A673 (cell line): ENCODE measurements at regions of chr14 and their contacts with region 1.

Region 1: GRCh38 chr14:60485598-60486251 is at the start of gene C14orf39:
- DNase-seq: peak; percentile 89
- H3K4me3 ChIP-seq: peak within 1 kb of the TSS; percentile 54
- H3K27ac ChIP-seq: peak within 1 kb of the TSS; percentile 43
- H3K4me1 ChIP-seq: no peaks in the 10 kb centered on the region
- H3K27me3 ChIP-seq: peaks cover 24% of the 10 kb centered on the region
- CTCF ChIP-seq: no peak
- total RNA-seq, gene C14orf39: 1.5 and 3.1 TPM in 2 replicates

Region 2: DNA sequence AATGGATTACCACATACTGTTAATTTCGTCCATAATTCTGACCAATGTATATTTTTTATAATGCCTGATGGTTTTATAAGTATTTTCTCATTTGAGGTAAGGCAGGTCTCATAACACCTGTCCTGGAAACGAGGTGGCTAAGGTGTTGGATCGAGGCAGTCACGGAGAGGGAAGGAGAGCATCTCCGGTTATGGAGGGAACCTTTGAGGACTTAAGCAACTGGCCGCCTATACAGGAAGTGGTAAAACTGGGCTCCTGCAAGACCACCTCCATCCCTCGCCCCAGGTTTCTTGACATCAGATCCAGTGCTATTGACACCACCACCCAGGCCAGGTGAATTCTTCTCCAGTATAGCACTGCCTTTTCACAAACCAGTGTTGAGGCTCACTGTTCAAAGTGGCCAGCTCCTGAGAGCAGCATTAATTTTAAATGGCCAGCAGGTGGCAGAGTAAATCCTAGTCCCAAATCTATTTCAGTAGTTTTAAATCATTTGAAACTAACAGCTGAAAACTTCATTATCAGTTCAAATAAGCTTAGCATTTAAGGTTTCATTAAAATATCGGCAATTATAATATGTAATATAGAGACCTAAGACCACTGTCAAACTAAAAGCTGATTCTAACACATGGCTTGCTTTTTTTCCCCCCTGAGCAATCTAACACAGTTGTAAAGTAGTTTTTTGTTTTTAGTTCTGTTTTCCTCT is 135.9 kb before region 1 on chr14:
- CTCF ChIA-PET with region 1: no interaction called
- POLR2A ChIA-PET with region 1: no interaction called
- intact Hi-C with region 1: loop called (anchors 1 kb)
- DNase-seq: peak; percentile 61
- H3K4me3 ChIP-seq: no peak overlapping the region
- H3K27ac ChIP-seq: no peak overlapping the region
- H3K4me1 ChIP-seq: no peaks in the 10 kb centered on the region
- H3K27me3 ChIP-seq: no peaks in the 10 kb centered on the region
- CTCF ChIP-seq: peak; percentile 78

Region 3: GRCh38 chr14:60396718-60397343 is 88.9 kb before region 1 on chr14:
- CTCF ChIA-PET with region 1: no interaction called
- POLR2A ChIA-PET with region 1: no interaction called
- intact Hi-C with region 1: no loop called
- DNase-seq: no peak
- H3K4me3 ChIP-seq: no peak overlapping the region
- H3K27ac ChIP-seq: no peak overlapping the region
- H3K4me1 ChIP-seq: no peaks in the 10 kb centered on the region
- H3K27me3 ChIP-seq: no peaks in the 10 kb centered on the region
- CTCF ChIP-seq: no peak

Region 4: GRCh38 chr14:60430276-60430675 is 55.4 kb before region 1 on chr14:
- CTCF ChIA-PET with region 1: no interaction called
- POLR2A ChIA-PET with region 1: no interaction called
- intact Hi-C with region 1: no loop called
- DNase-seq: no peak
- H3K4me3 ChIP-seq: no peak overlapping the region
- H3K27ac ChIP-seq: no peak overlapping the region
- H3K4me1 ChIP-seq: no peaks in the 10 kb centered on the region
- H3K27me3 ChIP-seq: no peaks in the 10 kb centered on the region
- CTCF ChIP-seq: no peak